ENCODE measurements at regions of chr17 and their contacts with region 1.

Region 1: GRCh38 chr17:50094753-50095619 is at the start of gene PDK2:
- DNase-seq: peak; percentile 98
- total RNA-seq, gene PDK2: 131 TPM

Region 2: DNA sequence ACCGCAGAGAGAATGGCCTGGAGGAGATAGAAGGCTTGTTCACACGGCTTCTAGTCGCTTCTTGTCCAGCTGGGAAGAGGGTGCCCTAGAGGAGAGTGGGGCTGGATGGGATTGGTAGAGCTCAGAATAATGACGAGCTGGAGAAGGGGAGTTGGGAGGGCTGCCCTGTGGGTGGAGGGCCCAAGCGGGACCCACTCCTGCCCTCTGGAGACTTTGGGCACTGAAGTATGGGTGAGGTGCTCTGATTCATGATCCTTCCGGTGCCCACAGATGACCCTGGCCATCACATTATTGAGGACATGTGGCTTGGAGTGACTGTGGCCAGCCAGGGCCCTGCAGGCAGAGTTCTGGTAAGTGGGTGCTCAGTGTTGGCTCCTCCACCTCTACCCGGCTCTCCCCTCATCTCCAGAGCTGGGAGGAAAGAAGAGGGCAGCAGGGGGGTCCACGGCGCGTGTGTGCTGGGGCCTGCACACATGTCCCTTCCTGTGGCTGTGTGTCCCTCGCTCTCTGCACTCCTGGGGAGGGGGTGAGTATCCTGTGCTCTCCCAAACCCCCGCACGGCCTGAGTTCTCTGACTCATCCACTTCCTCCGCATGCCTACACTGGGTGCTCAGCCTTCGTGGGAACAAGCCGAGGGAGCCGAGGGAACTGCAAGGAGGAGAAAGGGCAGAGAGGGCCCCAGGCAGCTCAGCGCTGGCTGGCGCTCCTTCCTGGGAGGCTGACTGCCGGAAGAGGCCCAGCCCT is 30.6 kb before region 1 on chr17:
- intact Hi-C with region 1: loop called (anchors 5 kb)
- DNase-seq: no peak

Region 3: GRCh38 chr17:50114849-50115357 is 19.9 kb after region 1 on chr17:
- intact Hi-C with region 1: no loop called
- DNase-seq: no peak

Region 4: DNA sequence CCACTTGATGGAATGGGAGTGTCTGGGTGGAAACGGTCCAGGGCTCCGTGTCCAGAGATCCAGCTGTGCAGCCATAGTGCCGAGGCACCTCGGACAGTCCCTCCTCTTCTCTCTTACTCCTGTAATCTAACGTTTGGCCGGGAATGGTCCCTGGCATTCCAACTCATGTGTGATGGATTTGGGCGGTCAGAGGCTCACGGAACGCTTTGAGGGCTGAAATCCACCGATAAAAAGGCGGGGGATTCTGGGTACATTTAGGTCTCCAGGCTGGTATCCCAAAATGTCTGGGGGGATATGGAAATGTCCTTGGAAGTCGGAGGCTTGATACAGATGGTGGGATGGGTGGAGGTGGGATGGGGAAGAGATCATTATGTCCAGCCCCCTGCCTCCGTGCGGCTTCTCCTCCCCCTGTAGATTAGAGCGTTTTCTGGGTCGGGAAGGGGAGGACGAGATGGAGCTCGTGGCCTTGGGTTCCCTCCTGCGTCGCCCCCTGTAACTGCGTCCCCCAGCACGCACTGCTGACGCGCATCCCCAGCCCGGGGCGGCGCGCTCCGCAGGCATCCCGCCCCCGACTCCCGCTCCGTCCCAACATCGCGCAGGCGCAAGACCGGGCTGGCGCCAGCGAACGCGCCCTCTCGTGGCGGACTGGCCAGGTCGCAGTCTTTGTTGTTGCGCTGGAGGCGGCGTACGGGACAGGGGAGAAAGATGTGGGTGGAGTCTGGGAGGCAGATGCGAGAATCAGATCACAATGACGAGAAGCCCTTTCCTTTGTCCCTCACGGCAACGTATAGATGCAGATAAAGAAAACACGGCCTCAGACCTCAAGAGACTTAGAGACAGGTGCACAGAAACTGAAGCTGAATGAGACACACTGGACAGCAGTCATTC is 66.3 kb after region 1 on chr17:
- intact Hi-C with region 1: loop called (anchors 2 kb)
- DNase-seq: peak; percentile 98

Region 5: GRCh38 chr17:50297407-50297865 is 202.4 kb after region 1 on chr17:
- intact Hi-C with region 1: loop called (anchors 5 kb)
- DNase-seq: peak; percentile 89

Measured in cardiac septum (tissue), 1 donor.